ENCODE measurements at regions of chr17 and their contacts with region 1.

Region 1: DNA sequence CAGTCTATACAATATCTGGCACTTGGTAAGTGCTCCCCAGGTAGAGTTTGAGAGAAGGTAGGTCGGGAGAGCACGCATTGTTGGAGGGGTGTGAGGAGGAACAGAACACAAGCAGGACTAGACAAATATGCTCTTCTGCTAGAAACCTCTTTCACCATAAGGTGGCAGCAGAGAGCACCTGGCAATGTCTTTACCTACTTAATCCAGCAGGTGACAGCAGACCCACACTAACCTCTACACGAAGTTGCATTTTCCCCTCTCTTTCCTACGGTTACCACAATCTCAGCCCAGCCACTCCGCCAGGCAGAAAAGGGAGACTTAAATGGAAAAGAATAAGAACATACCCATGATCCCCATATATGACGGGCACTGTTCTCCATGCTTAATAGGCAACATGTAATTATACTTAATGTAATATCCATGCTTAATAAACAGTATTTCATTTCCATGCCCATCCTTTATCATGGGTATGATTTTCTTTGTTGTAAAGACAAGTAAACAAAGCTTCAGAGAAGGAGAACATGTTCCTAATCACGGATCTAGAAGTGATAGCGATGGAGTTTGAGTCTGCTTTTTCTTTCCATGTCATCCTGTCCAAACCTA is 55.1 kb upstream of the CCL2 start:
- DNase-seq: peak; percentile 60 to 66 (median 64)
- H3K4me3 ChIP-seq: no peak overlapping the region
- H3K4me3 Mint-ChIP-seq: peak overlapping the region in 1 of 8 donors; percentile 41
- H3K27ac ChIP-seq: no peak overlapping the region
- H3K27ac Mint-ChIP-seq: peak overlapping the region in 1 of 7 donors; percentile 14
- H3K4me1 ChIP-seq: no peaks in the 10 kb centered on the region
- H3K4me1 Mint-ChIP-seq: peaks cover 4 to 6% (median 5%) of the 10 kb centered on the region in 4 donors
- H3K27me3 ChIP-seq: no peaks in the 10 kb centered on the region
- H3K27me3 Mint-ChIP-seq: peaks cover 14 to 24% of the 10 kb centered on the region in 2 donors

Region 2: GRCh38 chr17:34133350-34133749 is 66.7 kb before region 1 on chr17:
- CTCF ChIA-PET with region 1: no interaction called
- POLR2A ChIA-PET with region 1: no interaction called
- intact Hi-C with region 1: no loop called
- DNase-seq: no peak
- H3K4me3 ChIP-seq: no peak overlapping the region
- H3K4me3 Mint-ChIP-seq: no peak overlapping the region
- H3K27ac ChIP-seq: no peak overlapping the region
- H3K27ac Mint-ChIP-seq: no peak overlapping the region
- H3K4me1 ChIP-seq: no peaks in the 10 kb centered on the region
- H3K4me1 Mint-ChIP-seq: no peaks in the 10 kb centered on the region
- H3K27me3 ChIP-seq: no peaks in the 10 kb centered on the region
- H3K27me3 Mint-ChIP-seq: peaks cover 1 to 4% of the 10 kb centered on the region in 2 donors

Region 3: DNA sequence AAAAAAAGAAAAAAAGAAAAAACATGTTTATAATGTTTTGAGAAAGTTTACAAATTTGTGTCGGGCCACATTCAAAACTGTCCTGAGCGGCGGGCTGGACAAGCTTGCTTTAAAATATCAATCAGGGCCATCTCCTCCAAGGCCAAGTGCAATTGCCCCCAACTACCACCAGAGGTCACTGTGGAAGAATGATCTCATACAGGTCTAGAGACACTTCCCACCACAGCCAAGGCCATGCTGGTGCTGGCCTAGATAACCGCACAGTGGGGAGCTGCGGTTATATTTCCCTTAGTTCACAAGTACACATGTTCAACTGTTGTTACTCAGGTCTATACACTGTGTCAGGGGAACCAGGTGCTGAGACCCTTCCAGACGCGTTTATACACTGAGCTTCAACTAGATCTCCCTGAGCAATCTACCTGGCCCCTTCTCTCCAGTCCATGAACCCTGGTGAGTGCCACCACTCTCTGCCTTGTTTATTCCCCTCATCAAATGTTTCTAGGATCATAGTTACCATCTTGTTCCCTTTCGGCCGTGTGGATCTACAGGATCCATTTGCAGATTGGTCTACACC is 28.7 kb before region 1 on chr17:
- CTCF ChIA-PET with region 1: interaction called, 13 read pairs
- POLR2A ChIA-PET with region 1: no interaction called
- intact Hi-C with region 1: no loop called
- DNase-seq: peak; percentile 22 to 55 (median 35)
- H3K4me3 ChIP-seq: no peak overlapping the region
- H3K4me3 Mint-ChIP-seq: no peak overlapping the region
- H3K27ac ChIP-seq: no peak overlapping the region
- H3K27ac Mint-ChIP-seq: no peak overlapping the region
- H3K4me1 ChIP-seq: no peaks in the 10 kb centered on the region
- H3K4me1 Mint-ChIP-seq: no peaks in the 10 kb centered on the region
- H3K27me3 ChIP-seq: no peaks in the 10 kb centered on the region
- H3K27me3 Mint-ChIP-seq: peaks cover 5 to 32% of the 10 kb centered on the region in 2 donors

Region 4: GRCh38 chr17:34227707-34228106 is 27.7 kb after region 1 on chr17:
- CTCF ChIA-PET with region 1: no interaction called
- POLR2A ChIA-PET with region 1: no interaction called
- intact Hi-C with region 1: no loop called
- DNase-seq: no peak
- H3K4me3 ChIP-seq: no peak overlapping the region
- H3K4me3 Mint-ChIP-seq: no peak overlapping the region
- H3K27ac ChIP-seq: no peak overlapping the region
- H3K27ac Mint-ChIP-seq: no peak overlapping the region
- H3K4me1 ChIP-seq: no peaks in the 10 kb centered on the region
- H3K4me1 Mint-ChIP-seq: no peaks in the 10 kb centered on the region
- H3K27me3 ChIP-seq: no peaks in the 10 kb centered on the region
- H3K27me3 Mint-ChIP-seq: peaks cover 29 to 36% of the 10 kb centered on the region in 2 donors

Region 5: DNA sequence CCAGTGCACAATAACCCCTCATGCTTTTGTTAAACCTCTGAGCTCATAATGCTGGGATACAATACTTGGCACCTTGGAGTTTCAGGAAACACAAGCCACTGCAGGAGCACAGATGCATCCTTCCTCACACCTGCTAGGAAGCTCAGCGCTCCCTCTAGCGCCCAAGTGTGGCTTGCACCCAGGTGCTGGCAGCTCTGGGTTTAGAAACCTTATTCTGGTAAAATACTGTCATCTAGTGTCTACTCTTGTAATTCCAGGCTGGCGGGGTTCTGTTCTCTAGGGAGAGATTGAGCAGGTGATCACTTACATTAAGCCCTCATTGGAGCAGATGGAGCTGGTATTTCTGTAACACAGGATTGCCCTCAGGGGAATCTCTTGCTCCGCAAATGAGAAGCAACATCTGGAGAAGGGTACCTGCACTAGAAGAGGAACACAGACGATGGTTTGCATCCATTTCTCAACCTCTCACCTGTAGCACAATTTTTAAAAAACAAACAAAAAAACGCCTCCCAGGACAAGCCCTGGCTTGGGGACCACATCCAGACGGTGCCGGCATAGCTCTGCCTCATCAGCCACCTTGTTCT is 161.5 kb after region 1 on chr17:
- CTCF ChIA-PET with region 1: interaction called, 40 read pairs
- POLR2A ChIA-PET with region 1: no interaction called
- intact Hi-C with region 1: no loop called
- DNase-seq: peak in 4 of 5 donors; percentile 31 to 42 (median 31)
- H3K4me3 ChIP-seq: no peak overlapping the region
- H3K4me3 Mint-ChIP-seq: no peak overlapping the region
- H3K27ac ChIP-seq: no peak overlapping the region
- H3K27ac Mint-ChIP-seq: no peak overlapping the region
- H3K4me1 ChIP-seq: no peaks in the 10 kb centered on the region
- H3K4me1 Mint-ChIP-seq: peaks cover 5 to 11% (median 6%) of the 10 kb centered on the region in 4 donors
- H3K27me3 ChIP-seq: peaks cover 5% of the 10 kb centered on the region
- H3K27me3 Mint-ChIP-seq: peaks cover 5 to 13% of the 10 kb centered on the region in 2 donors

Region 6: DNA sequence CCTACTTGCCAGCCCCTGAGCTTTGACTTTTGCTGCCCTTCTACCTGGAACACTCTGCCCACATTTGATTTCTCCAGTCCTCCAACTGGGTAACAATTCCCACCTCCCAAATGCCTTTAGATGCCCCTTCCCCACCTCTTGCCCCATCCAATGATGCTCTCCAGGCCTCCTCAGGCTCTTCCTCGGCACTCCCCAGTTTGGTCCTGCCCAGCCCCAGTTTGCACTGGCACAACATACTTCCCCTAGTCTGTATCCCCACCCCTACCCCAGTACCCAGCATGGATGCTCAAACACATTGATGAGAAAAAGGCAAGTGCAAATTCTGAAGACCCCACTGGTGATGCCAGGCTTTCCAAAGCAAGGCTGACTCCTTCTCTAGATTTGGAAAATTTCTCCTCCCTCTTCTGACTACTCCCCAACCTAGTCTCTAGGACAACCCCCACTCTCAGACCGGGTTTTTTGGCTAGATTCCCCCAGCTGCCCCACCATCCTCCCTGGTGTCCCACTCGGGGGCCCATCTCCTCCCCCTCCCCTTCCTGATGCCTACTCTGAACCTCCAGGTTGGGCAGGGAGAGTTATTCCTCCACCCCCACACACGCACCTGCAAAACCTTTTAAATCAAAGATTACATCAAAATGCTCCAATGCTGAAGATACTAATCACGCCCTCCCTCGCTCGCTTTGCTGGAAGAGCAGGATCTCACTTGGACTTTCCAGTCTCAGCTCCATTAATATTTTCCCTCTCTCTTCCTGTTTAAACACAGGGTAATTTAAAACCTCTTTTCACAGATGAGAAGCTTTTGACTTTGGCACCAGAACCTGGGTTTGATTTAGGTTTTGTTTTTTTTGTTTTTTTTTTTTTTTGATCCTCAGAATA is 474.2 kb after region 1 on chr17:
- CTCF ChIA-PET with region 1: no interaction called
- POLR2A ChIA-PET with region 1: no interaction called
- intact Hi-C with region 1: no loop called
- DNase-seq: no peak
- H3K4me3 ChIP-seq: no peak overlapping the region
- H3K4me3 Mint-ChIP-seq: no peak overlapping the region
- H3K27ac ChIP-seq: no peak overlapping the region
- H3K27ac Mint-ChIP-seq: no peak overlapping the region
- H3K4me1 ChIP-seq: no peaks in the 10 kb centered on the region
- H3K4me1 Mint-ChIP-seq: no peaks in the 10 kb centered on the region
- H3K27me3 ChIP-seq: no peaks in the 10 kb centered on the region
- H3K27me3 Mint-ChIP-seq: peaks cover 9 to 22% of the 10 kb centered on the region in 2 donors

Measured in CD4-positive, alpha-beta memory T cell (primary cell).